WTC11 (cell line): ENCODE measurements at regions of chr14 and their contacts with region 1.

Region 1: DNA sequence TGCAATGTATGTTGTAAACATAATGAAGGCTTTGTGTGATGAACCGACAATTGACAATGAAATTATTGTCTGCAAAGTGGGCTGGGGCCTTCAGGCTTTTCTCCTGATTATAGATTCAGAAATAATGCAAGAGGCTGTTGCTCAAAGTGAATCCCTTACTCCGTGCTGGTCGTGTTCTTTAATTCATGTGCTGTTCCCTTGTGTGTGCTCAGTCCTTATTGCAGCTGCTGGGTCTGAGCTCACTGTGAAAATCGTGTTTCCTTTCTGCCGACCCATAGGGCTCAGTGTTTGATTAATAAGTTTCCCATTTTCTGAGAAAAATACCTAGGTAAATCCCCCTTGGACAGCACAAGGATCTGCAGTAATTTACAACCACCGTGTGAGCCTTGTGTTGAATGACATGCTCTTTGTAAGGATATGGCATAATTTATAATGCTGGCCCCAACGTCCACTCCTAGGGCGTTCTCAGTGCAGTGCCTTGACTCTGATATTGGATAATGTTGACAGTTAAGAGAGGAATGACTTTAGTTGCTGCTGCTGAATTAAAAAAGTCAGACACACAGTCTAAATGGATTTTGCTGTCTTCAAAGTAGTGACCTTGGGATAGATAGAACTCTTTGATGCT is 81.6 kb downstream of the RGS6 start:
- DNase-seq: no peak
- ATAC-seq: no peak
- H3K4me3 Mint-ChIP-seq: no peak overlapping the region
- H3K27ac Mint-ChIP-seq: no peak overlapping the region
- H3K4me1 Mint-ChIP-seq: no peaks in the 10 kb centered on the region
- H3K27me3 Mint-ChIP-seq: no peaks in the 10 kb centered on the region
- CTCF ChIP-seq: no peak

Region 2: DNA sequence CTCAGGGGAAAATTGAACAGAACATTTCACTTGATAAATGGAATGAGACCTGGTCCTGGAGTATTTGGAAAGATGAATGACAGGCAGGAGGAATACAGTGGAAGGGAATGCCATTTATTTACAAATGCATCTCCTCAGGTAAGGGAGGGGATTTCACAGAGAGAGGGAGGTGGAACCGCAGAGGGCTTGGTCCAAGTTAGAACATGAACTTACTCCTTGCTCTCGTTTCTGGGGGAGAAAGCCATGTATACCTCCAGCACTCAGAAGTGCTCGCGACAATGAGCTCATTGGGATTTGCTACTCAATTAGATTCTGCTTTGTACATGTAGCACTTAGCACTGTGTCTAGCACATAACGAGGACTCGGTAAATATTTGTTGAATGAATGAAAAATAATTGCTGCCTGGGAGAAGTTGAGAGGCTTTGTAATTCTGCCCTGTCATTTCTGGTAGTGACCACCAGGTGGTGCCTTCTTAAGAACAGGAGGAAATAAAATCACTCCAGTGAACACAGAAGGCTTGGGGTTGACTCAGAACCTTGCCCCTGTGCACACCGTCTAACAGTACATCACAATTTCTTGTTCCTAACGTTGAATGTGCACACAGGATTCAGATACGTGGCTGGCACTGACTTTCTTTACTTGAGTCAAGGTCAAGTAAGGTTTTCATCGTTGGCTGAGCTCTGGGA is 10.0 kb after region 1 on chr14:
- CTCF ChIA-PET with region 1: no interaction called
- POLR2A ChIA-PET with region 1: no interaction called
- DNase-seq: peak; percentile 44
- ATAC-seq: peak; percentile 82
- H3K4me3 Mint-ChIP-seq: peak overlapping the region; percentile 16; the same call in 1 of the 2 replicates
- H3K27ac Mint-ChIP-seq: no peak overlapping the region
- H3K4me1 Mint-ChIP-seq: peaks cover 8% of the 10 kb centered on the region
- H3K27me3 Mint-ChIP-seq: no peaks in the 10 kb centered on the region; the same call in 1 of the 2 replicates
- CTCF ChIP-seq: peak; percentile 74

Region 3: GRCh38 chr14:72084935-72085334 is 71.1 kb after region 1 on chr14:
- CTCF ChIA-PET with region 1: no interaction called
- POLR2A ChIA-PET with region 1: no interaction called
- DNase-seq: no peak
- ATAC-seq: no peak
- H3K4me3 Mint-ChIP-seq: no peak overlapping the region
- H3K27ac Mint-ChIP-seq: no peak overlapping the region
- H3K4me1 Mint-ChIP-seq: peaks cover 44% of the 10 kb centered on the region
- H3K27me3 Mint-ChIP-seq: no peaks in the 10 kb centered on the region
- CTCF ChIP-seq: no peak

Region 4: DNA sequence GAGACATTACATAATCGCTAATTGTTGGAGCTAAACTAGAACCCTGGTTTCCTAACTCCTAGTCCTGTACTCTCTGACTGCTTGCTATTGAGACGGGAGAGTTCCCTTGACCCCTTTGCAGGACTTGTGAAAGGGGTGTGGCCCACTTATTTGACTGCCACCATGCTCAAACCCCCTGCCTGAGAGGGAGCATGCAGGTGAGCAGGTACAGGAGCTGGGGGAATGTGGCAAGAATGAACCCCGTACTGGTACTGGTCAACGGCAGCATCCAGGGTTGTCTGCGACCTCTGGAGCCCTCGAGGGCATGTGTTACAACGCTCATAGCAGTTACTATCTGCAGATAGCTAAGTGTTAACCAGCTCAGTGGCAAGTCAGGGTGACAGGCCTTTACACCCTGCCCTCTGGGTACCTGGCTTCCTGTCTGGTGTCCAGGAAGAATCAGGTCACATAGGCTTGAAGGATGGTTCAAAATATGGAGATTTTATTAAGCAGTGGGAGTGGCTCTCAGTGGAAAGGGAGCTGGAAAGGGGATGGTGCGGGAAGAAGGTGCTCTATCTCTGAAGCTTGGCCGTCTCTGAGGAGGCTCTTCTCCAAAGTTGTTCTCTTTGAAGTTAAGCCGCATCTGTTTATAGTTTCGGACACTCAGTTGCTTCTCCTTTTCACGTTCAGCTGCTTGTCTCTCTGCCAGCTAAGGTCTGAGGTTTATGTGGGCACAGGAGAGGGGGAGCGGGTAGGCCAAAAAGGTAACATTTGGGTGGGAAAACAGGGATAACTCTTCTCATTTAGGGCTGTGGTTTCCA is 223.9 kb after region 1 on chr14:
- CTCF ChIA-PET with region 1: no interaction called
- POLR2A ChIA-PET with region 1: interaction called, 10 read pairs
- DNase-seq: no peak
- ATAC-seq: no peak
- H3K4me3 Mint-ChIP-seq: no peak overlapping the region
- H3K27ac Mint-ChIP-seq: no peak overlapping the region
- H3K4me1 Mint-ChIP-seq: peaks cover 6% of the 10 kb centered on the region
- H3K27me3 Mint-ChIP-seq: no peaks in the 10 kb centered on the region; the same call in none of the 2 replicates
- CTCF ChIP-seq: no peak